Activated T-helper 1 cell treated with anti-CD3 and anti-CD28 coated beads, Interleukin-12 subunit alpha, Interleukin-12 subunit beta, Interleukin-2, Interleukin-4 antibody, amounts not matched to agents 30 ng/mL and 10 ng/mL and 1 ng/mL, durations not matched to agents 14 hours and 24 hours and 36 hours (primary cell): ENCODE measurements at regions of chr1 and their contacts with region 1.

Region 1: GRCh38 chr1:87131809-87132283 is 196.8 kb upstream of the LMO4 start:
- DNase-seq: peak; percentile 59
- H3K4me3 Mint-ChIP-seq: peak overlapping the region; percentile 76
- H3K27ac Mint-ChIP-seq: no peak overlapping the region
- H3K4me1 Mint-ChIP-seq: no peaks in the 10 kb centered on the region
- H3K27me3 Mint-ChIP-seq: peaks cover 32% of the 10 kb centered on the region

Region 2: GRCh38 chr1:86396498-86396890 is 735.4 kb before region 1 on chr1:
- intact Hi-C with region 1: no loop called
- DNase-seq: no peak
- H3K4me3 Mint-ChIP-seq: peak overlapping the region; percentile 97
- H3K27ac Mint-ChIP-seq: peak overlapping the region; percentile 96
- H3K4me1 Mint-ChIP-seq: peaks cover 49% of the 10 kb centered on the region
- H3K27me3 Mint-ChIP-seq: no peaks in the 10 kb centered on the region

Region 3: GRCh38 chr1:87386217-87386790 is 254.5 kb after region 1 on chr1:
- intact Hi-C with region 1: loop called (anchors 5 kb)
- DNase-seq: no peak
- H3K4me3 Mint-ChIP-seq: no peak overlapping the region
- H3K27ac Mint-ChIP-seq: no peak overlapping the region
- H3K4me1 Mint-ChIP-seq: no peaks in the 10 kb centered on the region
- H3K27me3 Mint-ChIP-seq: peaks cover 9% of the 10 kb centered on the region

Region 4: DNA sequence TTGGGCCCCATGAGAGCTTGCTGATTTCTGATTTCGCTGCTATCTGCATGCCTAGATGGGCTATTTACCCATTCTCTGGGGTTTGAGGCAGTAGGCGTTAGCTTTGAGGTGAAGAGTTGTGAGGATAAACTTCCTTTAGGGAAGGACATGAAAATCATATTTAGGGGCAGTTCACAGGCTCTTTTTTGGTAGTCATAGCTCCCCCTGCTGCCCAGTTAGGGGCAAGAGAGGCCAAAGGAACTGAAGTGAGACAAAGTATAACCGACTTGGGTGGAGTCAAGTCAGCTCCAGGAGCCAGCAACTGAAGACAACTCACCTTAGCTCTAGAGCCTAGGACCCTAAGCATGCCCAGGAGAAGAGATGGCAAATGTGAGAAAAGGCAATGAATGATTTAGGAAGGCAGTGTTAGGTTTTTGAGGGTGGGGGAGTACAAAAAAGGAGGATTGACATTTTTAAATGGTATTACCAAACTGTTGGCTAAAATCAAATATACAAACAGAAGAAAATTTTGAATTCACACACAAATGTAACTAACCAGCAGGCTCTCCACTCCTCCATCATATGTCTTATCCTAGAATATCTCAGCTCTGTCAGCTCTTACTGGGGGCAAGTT is 822.0 kb after region 1 on chr1:
- intact Hi-C with region 1: loop called (anchors 2 kb)
- DNase-seq: peak; percentile 39
- H3K4me3 Mint-ChIP-seq: no peak overlapping the region
- H3K27ac Mint-ChIP-seq: no peak overlapping the region
- H3K4me1 Mint-ChIP-seq: no peaks in the 10 kb centered on the region
- H3K27me3 Mint-ChIP-seq: peaks cover 14% of the 10 kb centered on the region